Calu3 (cell line): ENCODE measurements at regions of chr4 and their contacts with region 1.

Region 1: GRCh38 chr4:144562019-144562705 is 83.8 kb upstream of the HHIP start:
- DNase-seq: peak; percentile 53
- H3K4me3 Mint-ChIP-seq: peak overlapping the region; percentile 34
- H3K27ac Mint-ChIP-seq: peak overlapping the region; percentile 52
- H3K4me1 Mint-ChIP-seq: peaks cover 8% of the 10 kb centered on the region
- H3K27me3 Mint-ChIP-seq: no peaks in the 10 kb centered on the region
- CTCF ChIP-seq: peak; percentile 13

Region 2: GRCh38 chr4:144754562-144755410 is 192.6 kb after region 1 on chr4:
- CTCF ChIA-PET with region 1: no interaction called
- intact Hi-C with region 1: loop called (anchors 2 kb)
- DNase-seq: peak; percentile 20
- H3K4me3 Mint-ChIP-seq: no peak overlapping the region
- H3K27ac Mint-ChIP-seq: no peak overlapping the region
- H3K4me1 Mint-ChIP-seq: no peaks in the 10 kb centered on the region
- H3K27me3 Mint-ChIP-seq: no peaks in the 10 kb centered on the region
- CTCF ChIP-seq: no peak

Region 3: DNA sequence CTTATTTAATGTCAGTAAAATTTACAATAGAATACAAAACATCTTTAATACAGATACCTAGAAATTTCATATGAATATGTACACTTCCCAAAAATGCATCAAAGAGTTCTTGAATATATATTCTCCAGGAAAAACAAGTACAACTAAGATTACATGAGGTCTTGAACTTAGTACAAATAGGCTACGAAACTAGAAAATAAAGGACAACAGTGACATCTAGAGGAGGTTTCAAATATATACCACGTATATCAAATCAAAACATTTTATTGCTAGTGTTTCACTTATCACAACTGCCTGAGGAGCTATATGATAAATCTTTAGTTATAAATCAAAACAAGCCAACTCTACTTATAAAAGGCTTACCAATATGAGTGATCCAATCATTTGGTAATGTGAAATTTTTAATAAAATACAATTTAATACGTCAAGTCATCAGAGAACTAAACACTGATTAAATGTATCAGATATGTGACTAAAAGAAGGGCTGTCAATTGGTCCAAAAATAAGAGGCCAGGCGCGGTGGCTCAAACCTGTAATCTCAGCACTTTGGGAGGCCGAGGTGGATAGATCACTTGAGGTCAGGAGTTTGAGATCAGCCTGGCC is 499.3 kb after region 1 on chr4:
- CTCF ChIA-PET with region 1: no interaction called
- intact Hi-C with region 1: loop called (anchors 10 kb)
- DNase-seq: no peak
- H3K4me3 Mint-ChIP-seq: no peak overlapping the region
- H3K27ac Mint-ChIP-seq: no peak overlapping the region
- H3K4me1 Mint-ChIP-seq: no peaks in the 10 kb centered on the region
- H3K27me3 Mint-ChIP-seq: no peaks in the 10 kb centered on the region
- CTCF ChIP-seq: no peak